CD4-positive, alpha-beta memory T cell (primary cell): ENCODE measurements at regions of chr20 and their contacts with region 1.

Region 1: DNA sequence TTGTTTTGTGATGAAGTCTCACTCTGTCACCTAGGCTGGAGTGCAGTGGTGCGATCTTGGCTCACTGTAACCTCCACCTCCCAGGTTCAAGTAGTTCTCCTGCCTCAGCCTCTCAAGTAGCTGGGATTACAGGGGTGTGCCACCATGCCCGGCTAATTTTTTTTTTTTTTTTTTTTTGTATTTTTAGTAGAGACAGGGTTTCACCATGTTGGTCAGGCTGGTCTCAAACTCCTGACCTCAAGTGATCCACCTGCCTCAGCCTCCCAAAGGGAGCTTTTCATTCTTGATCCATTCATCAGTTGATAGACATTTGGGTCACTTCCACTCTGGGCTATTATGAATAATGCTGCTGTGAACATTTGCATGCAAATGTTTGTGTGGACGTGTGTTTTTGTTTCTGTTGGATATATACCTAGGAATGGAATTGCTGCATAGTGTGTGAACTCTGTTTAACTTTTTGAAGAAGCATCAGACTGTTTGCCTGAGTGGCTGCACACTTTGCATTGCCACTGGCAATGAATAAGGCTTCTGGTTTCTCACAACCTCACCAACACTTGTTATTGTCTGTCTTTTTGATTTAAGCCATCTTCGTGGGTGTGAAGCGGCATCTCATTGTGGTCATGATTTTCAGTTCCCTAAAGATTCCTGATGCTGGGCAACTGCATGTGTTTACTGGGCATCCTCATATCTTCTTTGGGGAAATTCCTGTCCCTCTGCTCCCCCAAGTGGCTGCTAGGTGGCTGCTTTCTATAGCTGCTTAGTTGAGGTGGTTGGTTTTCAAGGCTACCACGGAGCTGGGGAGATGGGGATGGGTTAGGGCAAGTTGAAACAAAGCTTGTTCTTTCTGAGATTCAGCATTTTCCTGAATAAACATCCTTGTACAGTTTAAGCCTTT is 403.6 kb upstream of the SULF2 start:
- DNase-seq: no peak
- H3K4me3 ChIP-seq: no peak overlapping the region
- H3K4me3 Mint-ChIP-seq: no peak overlapping the region
- H3K27ac ChIP-seq: no peak overlapping the region
- H3K27ac Mint-ChIP-seq: no peak overlapping the region
- H3K4me1 ChIP-seq: no peaks in the 10 kb centered on the region
- H3K4me1 Mint-ChIP-seq: no peaks in the 10 kb centered on the region
- H3K27me3 ChIP-seq: no peaks in the 10 kb centered on the region
- H3K27me3 Mint-ChIP-seq: peaks cover 3 to 4% of the 10 kb centered on the region in 2 donors

Region 2: DNA sequence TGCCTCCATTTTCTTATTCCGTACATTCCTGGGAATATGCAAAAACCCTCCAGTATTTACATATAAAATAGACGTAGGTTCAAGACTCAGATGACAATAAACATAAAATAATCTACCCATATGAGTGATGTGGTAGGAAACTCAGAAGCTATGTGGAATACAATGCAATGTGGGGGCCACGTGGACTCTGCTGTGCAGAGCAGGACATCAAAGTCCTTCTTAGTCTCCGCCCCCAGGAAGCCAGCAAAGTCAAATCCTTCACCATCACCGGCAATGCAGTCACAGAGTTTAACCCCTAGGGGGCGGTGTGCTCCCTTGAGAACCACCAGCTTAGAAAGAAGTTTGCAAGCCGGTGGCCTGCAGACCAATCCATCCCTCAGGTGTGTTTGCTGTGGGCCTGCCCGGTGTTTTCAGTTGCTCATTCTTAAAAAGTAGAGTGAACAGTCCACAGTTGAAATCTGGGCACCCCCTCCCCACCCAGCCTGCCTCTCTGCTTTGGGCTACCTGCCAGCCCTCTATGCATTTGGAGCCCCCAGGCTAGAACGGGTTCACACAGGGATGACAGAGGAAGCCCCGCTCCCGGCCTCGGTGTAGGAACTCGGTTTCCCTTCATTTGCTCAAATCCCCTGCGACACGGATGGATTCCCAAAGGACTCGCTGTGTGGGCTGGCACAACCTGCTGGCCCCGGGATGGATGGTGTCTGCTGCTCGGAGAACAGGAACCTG is 463.5 kb before region 1 on chr20:
- CTCF ChIA-PET with region 1: no interaction called
- POLR2A ChIA-PET with region 1: no interaction called
- intact Hi-C with region 1: loop called (anchors 10 kb)
- DNase-seq: peak; percentile 83 to 89 (median 87)
- H3K4me3 ChIP-seq: no peak overlapping the region
- H3K4me3 Mint-ChIP-seq: no peak overlapping the region
- H3K27ac ChIP-seq: no peak overlapping the region
- H3K27ac Mint-ChIP-seq: peak overlapping the region; percentile 70 to 98 (median 88)
- H3K4me1 ChIP-seq: peaks cover 38% of the 10 kb centered on the region
- H3K4me1 Mint-ChIP-seq: peaks cover 29 to 49% (median 39%) of the 10 kb centered on the region in 4 donors
- H3K27me3 ChIP-seq: no peaks in the 10 kb centered on the region
- H3K27me3 Mint-ChIP-seq: no peaks in the 10 kb centered on the region

Region 3: DNA sequence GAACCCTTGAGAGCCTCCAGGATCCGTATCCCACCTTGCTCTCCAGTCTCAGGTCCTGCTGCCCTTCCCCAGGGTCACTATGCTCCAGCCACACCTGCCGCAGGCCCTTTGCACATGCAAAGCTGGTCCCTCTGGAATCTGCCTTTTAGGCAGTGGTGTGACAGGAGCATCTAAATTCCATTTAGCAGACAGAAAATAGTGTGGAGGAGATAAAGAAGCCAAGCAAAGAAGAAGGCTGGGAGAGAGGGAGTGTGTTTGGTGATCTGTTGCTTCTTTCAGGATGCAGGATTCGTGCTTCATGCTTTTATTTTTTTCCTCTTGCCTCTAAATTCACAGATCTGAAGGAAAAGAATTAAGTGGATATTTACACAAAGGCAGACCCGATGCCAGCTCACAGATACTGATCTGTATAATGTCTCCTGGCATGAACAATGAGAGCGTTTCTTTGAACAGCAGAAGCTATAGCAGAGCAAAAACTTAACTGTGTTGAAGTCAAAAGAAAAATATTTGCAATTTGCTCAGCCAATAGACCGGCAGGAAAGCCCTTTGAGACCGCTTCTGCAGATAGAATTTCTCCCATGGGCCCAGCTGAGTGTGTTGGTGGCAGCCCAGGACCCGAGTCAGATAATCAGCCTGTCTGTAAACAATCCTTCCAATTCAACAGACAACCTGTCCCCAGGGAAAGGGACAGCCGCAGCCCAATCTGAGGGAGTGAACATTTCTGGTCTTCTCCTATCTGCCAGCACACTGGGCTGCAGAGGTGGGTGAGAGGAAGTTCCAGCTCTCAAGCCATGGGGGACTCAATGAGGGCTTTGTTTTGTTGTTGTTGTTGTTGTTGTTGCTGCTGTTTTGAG is 57.8 kb after region 1 on chr20:
- CTCF ChIA-PET with region 1: no interaction called
- POLR2A ChIA-PET with region 1: no interaction called
- intact Hi-C with region 1: no loop called
- DNase-seq: no peak
- H3K4me3 ChIP-seq: no peak overlapping the region
- H3K4me3 Mint-ChIP-seq: no peak overlapping the region
- H3K27ac ChIP-seq: no peak overlapping the region
- H3K27ac Mint-ChIP-seq: no peak overlapping the region
- H3K4me1 ChIP-seq: no peaks in the 10 kb centered on the region
- H3K4me1 Mint-ChIP-seq: no peaks in the 10 kb centered on the region
- H3K27me3 ChIP-seq: no peaks in the 10 kb centered on the region
- H3K27me3 Mint-ChIP-seq: peaks cover 16 to 18% of the 10 kb centered on the region in 2 donors

Region 4: DNA sequence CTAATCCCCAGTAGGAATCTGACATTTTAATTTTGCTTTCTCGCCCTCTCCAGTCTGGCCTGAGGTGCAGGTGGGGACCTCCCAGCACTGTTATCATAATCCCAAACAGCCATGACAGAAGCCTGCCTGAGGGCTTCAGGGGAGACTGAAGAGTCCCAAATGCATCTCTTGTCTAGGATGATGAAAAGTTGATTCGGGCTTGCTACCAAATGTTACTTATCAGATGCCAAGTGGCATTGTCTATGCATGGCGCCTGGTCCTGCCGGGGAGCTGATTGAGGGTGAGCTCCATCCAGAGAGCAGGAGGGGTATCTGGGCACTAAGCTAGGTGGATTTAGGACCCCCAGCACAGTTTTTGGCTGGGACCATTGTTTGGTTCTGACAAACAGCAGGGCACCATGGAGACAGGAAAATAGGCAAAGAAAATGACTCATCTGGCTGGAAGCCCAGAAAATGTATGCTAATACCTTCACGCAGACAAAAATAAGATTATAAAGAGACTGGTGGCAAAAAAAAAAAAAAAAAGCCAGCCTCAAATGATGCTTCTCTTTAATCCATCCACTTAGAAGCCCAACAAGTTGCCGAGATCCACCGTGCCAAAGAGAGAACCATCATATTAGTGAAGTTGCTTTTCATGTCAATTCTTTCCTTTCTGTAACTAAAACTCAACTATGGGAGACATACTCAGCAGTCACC is 110.1 kb after region 1 on chr20:
- CTCF ChIA-PET with region 1: no interaction called
- POLR2A ChIA-PET with region 1: no interaction called
- intact Hi-C with region 1: no loop called
- DNase-seq: no peak
- H3K4me3 ChIP-seq: no peak overlapping the region
- H3K4me3 Mint-ChIP-seq: no peak overlapping the region
- H3K27ac ChIP-seq: no peak overlapping the region
- H3K27ac Mint-ChIP-seq: no peak overlapping the region
- H3K4me1 ChIP-seq: no peaks in the 10 kb centered on the region
- H3K4me1 Mint-ChIP-seq: peaks cover 0 to 2% (median 0%) of the 10 kb centered on the region in 4 donors
- H3K27me3 ChIP-seq: no peaks in the 10 kb centered on the region
- H3K27me3 Mint-ChIP-seq: peaks cover 7 to 24% of the 10 kb centered on the region in 2 donors